AG04449 (cell line): ENCODE measurements at regions of chr17 and their contacts with region 1.

Region 1: DNA sequence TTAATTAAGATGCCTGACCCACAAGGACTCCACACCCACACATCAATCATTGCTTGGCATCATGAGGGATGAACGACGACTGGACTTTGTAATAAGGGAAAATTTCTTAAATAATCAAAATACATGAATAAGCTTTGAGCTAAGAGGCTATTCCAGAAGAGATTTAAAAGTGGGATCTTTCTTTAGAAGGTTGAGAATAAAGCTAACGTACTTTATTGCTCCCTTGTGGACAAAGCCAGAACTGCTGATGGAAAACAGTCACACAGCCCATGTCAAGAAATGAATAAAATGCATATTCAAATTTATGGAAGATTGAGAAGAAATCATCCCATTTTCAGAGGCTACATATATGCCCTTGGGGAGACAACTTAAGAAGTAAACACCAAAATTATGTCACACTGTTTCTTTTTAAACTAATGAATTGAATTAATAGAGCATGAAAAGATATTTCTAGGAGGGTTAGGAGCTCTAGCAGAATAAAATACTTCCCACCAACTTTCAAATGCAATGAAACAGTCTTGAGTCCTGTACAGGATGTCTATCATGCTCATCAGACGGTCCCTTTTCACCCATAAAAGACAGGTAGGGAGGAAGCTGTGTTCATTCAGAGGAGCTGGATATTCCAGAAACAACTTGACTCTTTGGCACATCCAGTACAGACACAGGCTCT is 60.2 kb upstream of the PHOSPHO1 start:
- DNase-seq: peak; percentile 4
- H3K4me3 ChIP-seq: no peak overlapping the region
- CTCF ChIP-seq: peak; percentile 53

Region 2: DNA sequence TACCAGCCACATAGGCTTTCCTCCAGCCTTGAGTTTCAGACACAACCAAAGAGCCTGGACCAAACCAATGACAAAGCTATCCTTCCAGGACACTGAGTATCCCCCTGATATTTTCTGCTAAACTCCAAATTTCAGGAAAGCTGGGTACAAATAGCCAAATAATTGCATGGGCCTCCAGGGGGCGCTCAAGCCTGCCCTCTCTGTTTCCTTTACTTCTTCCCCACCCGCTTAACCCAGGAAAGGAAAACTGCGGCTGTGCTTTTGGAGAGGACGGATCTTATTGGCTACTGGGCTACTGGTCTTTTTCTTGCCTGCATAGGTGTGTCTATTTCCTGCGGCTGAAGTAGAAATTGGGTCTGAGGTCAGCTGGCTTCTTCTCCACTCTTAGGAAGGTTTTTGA is 110.5 kb before region 1 on chr17:
- CTCF ChIA-PET with region 1: interaction called, 49 read pairs
- POLR2A ChIA-PET with region 1: no interaction called
- DNase-seq: no peak
- H3K4me3 ChIP-seq: no peak overlapping the region
- CTCF ChIP-seq: peak; percentile 70

Region 3: DNA sequence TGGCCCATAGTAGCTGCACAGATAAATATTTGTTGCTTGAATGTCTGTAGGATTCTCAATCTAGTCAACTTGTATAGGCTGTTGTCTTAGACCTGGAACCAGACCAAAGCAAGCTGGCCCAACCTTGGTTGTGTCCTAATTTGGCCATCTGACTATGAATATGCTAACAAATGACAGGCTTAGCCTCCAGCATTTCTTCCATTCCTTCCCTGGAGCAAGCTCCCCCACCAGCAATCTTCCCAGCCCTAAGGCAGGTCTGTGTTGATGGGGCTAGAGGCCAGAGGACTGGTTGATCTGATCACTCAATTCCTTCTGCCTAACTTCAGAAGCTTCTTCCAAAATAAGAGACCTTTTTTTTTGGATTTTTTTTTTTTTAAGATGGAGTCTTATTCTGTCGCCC is 50.9 kb before region 1 on chr17:
- CTCF ChIA-PET with region 1: interaction called, 12 read pairs
- POLR2A ChIA-PET with region 1: no interaction called
- DNase-seq: no peak
- H3K4me3 ChIP-seq: no peak overlapping the region
- CTCF ChIP-seq: no peak

Region 4: GRCh38 chr17:49277638-49278037 is 13.2 kb before region 1 on chr17:
- CTCF ChIA-PET with region 1: interaction called, 19 read pairs
- POLR2A ChIA-PET with region 1: no interaction called
- DNase-seq: no peak
- H3K4me3 ChIP-seq: no peak overlapping the region
- CTCF ChIP-seq: no peak

Region 5: GRCh38 chr17:49315551-49316257 is 24.9 kb after region 1 on chr17:
- CTCF ChIA-PET with region 1: interaction called, 14 read pairs
- POLR2A ChIA-PET with region 1: no interaction called
- DNase-seq: peak; percentile 69
- H3K4me3 ChIP-seq: no peak overlapping the region
- CTCF ChIP-seq: peak; percentile 63